ENCODE measurements at regions of chr18 and their contacts with region 1.

Region 1: DNA sequence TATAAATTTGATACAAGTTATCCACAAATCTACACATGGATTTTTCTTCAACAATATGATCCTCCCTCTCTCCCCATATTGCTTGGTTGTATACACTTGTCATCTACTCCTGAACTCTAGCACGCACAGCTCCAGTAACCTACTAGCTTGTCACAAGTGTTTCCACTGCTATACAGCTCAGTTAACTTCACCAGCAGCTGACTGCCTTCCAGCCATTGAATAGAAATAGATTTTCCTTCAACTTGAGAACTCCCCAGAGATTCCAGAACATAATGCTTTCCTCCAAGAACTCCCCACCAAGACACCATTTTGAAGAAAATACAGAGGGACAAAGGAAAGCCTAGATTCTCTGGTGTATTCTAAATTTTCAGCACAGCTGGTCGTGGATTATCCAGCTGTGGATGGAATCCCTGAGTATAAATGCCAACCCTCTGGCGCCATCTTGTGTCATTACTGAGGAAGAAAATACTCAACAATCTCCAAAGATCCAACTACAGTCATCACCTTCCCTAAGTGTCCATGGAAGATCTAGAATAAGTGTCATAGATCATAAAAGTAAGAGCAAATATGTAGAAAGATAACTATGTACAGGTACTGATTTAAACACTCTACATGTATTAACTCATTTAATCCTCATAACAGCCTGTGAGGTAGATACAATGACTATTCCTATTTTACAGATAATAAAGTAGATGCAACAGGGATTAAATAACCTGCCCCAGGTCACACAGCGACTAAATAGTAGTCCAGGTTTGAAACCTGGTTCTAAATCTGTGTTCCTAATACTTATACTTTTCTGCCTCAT is 156.7 kb downstream of the ARHGAP28 start:
- DNase-seq: peak; percentile 52
- ATAC-seq: peak; percentile 53 to 84

Region 2: GRCh38 chr18:5868218-5869115 is 1017.7 kb before region 1 on chr18:
- intact Hi-C with region 1: loop called (anchors 5 to 10 kb)
- DNase-seq: peak; percentile 74
- ATAC-seq: peak; percentile 89 to 92

Region 3: DNA sequence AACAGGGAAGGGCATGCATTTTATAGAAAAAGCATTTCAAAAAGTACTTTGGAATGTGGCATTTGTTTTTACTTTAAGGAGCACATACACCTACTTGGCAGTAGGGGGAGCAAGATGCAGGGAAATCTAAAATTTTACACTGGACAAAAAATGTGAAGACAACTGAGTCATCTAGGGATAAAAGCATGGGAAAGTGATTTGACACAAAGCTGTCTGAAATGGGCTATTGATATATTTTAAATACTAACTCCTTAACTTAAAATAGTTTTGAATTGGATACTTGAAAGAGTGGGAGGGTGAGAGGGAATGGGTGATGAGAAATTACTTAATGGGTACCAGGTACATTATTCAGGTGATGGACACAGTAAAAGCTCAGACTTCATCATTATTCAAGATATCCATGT is 1006.7 kb before region 1 on chr18:
- intact Hi-C with region 1: loop called (anchors 5 to 10 kb)
- DNase-seq: no peak
- ATAC-seq: peak in 1 of 2 donors; percentile 50

Region 4: DNA sequence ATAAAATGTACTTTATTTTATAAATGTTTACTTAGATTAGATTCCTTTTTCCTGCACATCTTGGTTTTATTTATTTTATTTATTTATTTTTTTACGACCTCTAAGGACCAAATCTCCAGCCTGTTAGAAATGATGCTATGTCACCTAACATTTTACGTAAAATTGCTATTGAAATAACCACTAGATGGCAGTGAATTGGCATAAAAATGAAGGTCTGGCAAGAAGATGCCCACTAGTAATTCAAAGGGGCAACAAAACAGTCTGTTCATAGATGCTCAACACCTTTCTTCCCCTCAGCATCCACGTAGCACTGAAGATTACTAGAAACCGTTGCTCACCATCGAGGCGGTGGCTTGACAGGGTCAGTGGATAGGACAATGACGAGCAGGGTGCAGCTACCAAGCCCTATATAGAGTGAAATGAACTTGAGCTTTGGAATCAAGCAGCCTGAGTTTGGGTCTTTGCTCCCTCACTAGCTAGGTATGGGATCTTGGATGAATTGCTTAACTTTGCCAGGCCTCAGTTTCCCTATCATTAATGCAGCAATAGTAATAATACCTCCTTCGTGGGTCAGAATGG is 342.8 kb before region 1 on chr18:
- intact Hi-C with region 1: loop called (anchors 2 kb)
- DNase-seq: no peak
- ATAC-seq: no peak

Region 5: GRCh38 chr18:6741232-6741663 is 144.9 kb before region 1 on chr18:
- intact Hi-C with region 1: loop called in 1 of 2 experiments (anchors 10 kb)
- DNase-seq: peak; percentile 58
- ATAC-seq: peak; percentile 95 to 99